ENCODE measurements at regions of chr1 and their contacts with region 1.

Region 1: GRCh38 chr1:21368515-21369289 is 71.2 kb upstream of the NBPF3 start:
- DNase-seq: peak; percentile 86

Region 2: DNA sequence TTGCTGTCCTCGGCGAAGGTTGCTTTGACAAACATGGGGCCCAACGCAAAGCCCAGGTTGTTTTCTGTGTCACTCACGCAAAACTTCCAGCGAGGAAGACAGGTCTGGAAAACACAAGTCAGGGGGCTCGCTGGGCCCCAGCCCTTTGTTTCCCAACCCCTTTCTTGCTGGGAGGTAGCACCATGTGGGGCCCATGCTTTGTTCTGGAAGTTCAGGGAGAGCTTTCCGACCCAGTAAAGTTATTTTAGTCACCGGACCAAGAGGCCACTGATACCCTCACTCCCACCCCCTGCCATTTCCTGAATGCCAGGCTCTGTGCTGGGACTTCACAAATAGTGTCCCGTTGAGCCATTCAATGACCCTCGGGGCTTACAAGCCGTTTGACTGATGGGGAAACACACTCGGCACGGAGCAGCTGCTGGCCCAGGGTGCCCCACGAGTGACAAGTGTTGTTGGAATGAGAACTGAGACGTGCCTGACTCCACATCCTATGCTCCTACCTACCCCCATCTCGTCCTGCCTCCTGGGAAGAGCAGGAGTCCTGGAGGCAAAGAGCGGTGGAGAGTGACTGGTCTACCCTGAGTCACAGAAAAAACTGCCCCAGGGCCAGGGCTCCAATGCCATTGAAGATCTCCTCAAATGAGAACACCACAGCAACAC is 130.4 kb before region 1 on chr1:
- intact Hi-C with region 1: no loop called
- DNase-seq: no peak

Region 3: GRCh38 chr1:21255278-21255942 is 113.3 kb before region 1 on chr1:
- intact Hi-C with region 1: loop called (anchors 1 kb)
- DNase-seq: peak; percentile 94

Region 4: DNA sequence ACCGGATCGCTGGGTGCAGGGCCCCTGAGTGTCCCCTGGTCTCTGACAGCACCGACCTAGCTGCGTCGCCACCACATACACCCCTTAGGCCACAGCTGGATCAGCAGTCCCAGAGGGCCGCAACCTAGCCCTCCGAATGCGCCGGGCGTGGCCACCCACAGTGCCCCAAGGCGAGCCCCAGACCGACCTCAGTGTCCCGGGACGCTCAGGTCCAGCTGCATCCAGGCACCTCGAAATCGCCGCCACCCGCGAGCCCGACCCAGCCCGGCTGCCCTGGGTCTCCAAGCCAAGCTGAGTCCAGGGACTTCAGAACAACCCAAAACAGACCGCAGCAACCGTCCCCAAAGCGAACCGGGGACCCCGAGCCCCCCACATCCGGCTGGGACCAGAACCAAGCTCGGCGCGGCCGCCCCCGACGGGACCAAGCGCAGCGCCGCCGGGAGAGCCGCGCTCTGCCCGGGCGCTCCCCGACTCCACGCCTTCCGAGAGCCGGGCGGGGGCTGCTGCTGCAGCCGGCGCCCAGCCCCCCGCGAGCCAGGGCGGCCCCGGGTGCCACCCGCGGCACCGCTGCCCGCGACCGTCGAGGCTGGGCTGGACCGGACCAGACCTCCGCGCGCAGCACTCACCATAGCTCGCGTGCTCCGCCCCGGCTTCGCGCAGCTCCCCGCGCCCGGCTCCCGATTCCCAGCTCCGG is 23.8 kb before region 1 on chr1:
- intact Hi-C with region 1: no loop called
- DNase-seq: no peak

Region 5: GRCh38 chr1:21508580-21509350 is 140.1 kb after region 1 on chr1:
- intact Hi-C with region 1: loop called (anchors 5 kb)
- DNase-seq: peak; percentile 93

Region 6: DNA sequence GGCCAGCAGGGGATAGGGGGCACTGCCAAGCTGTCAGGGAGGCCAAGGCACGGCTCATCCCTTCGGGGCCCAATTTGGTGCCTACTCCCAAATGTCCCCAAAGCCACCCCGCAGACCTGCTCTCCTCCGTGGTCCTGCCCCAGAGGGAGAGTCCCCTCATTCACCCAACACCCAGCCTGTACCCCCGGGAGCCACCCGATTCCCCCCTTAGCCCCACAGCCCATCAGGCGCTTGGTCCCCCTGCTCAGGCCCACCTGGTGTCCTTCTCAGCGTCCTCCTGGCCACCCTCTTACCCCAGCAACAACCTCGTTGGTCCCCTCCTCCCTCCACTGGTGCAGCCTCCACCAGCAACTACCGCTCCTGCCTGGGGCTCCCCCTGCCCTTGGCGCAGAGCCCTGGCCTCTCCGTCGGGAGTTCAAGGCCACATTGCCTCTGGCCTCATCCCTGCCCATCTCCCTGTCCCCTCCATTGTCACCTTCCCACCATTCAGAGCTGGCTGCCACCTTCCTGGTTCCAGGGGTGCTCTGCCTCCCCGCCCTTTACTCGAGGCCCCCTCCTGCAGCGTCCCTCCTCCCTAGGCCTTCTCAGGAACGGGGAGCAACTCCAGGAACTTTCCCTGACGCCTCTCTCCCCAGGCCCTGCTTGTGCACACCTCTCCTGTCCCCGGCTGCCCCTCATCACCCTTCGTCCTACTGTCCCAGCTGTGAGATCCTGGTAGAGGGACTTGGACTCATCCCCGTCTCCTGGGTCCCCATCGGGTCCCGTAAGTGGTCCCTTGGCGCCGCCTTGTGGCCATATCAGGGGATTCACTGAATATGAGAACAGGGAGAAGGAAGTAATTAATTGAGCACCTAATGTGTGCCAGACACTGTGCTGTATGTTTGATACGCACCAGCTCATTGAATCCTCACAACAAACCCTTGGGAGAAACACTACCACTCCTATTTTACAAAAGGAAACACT is 226.5 kb after region 1 on chr1:
- intact Hi-C with region 1: loop called (anchors 5 kb)
- DNase-seq: peak; percentile 94

Measured in cardiac septum (tissue), 1 donor.